ENCODE measurements at regions of chr1 and their contacts with region 1.

Region 1: DNA sequence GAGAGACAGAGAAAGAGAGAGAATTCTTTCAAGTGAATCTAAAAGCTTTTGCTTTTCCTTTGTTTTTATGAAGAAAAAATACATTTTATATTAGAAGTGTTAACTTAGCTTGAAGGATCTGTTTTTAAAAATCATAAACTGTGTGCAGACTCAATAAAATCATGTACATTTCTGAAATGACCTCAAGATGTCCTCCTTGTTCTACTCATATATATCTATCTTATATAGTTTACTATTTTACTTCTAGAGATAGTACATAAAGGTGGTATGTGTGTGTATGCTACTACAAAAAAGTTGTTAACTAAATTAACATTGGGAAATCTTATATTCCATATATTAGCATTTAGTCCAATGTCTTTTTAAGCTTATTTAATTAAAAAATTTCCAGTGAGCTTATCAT is 117.6 kb downstream of the PTPRC start:
- DNase-seq: no peak
- ATAC-seq: no peak

Region 2: DNA sequence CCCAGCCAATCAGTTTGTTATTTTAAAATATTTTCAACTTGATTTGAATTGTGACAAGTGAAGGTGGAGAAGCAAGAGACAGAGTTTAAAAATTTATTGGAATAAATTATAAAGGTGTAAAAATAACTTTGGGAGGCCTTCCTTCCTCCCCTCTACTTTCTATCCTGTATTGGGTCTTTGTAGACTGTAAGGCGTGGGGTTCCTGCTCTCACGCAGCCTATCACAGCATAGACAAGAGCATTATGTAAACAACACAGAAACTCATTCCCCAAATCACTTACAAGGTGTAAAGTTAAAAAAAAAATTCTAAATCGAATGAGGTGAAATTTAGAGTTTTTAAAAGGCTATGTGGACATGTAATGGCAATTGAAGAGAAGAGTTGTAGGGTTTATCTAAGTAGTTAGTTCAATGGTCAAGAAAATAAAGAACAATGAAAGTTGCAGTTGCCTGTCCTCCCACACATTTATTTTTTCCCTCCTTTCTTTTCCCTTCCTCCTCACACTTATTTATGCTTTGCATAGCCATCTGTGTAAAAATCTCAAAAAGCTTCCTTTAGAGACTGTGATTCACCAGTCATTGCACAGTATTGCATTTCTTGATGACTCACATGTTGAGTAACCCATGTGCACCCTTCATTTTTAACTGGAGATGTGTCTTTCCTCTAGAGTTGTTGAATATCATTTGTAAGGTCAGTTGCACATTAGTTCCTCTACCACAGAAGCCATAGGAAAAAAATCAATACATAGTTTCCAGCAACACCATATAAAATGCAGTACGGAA is 124.5 kb after region 1 on chr1:
- intact Hi-C with region 1: no loop called
- DNase-seq: no peak
- ATAC-seq: no peak

Region 3: DNA sequence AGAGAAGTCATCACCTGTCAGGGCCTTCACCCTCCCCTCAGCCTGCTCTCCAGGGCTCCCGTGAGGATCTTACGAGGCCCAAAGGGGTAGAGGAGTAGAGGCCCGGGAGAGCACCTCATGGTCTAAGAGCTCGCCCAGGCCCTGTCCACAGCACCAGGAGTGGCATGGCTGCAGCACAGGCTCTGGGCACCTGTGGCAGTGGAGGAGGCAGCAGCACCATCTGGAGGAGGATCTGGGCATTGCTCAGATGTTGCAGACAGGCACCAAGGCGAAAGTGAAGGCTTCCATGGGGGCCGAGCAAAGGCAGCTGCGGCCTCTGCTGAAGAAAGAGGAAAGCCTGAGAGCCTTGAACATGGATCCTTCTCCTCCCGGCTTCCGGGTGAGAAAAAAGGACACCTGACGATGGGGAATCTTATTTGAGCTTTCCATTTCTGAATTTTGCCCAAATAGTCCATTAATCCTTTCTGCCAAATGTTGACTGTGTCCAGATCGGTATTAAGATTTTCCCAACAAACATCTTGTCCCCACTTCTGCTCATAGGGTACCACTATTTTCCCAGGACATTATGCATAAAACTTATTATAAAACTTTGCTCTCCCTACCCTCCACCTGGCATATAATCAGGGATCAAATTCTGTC is 487.1 kb after region 1 on chr1:
- intact Hi-C with region 1: loop called (anchors 5 kb)
- DNase-seq: peak; percentile 72
- ATAC-seq: peak; percentile 68

Region 4: GRCh38 chr1:199551967-199552565 is 795.6 kb after region 1 on chr1:
- intact Hi-C with region 1: loop called (anchors 10 kb)
- DNase-seq: no peak
- ATAC-seq: no peak

Measured in Right ventricle myocardium inferior (tissue), 1 donor.